ENCODE measurements at regions of chr16 and their contacts with region 1.

Region 1: GRCh38 chr16:49857423-49858181 is 1.7 kb upstream of the ZNF423 start:
- DNase-seq: peak; percentile 54
- H3K27ac ChIP-seq: peak overlapping the region; percentile 46; the same call in 1 of the 2 replicates
- CTCF ChIP-seq: peak; percentile 62

Region 2: GRCh38 chr16:49846800-49847199 is 10.8 kb before region 1 on chr16:
- CTCF ChIA-PET with region 1: no interaction called
- POLR2A ChIA-PET with region 1: no interaction called
- DNase-seq: no peak
- H3K27ac ChIP-seq: no peak overlapping the region
- CTCF ChIP-seq: no peak

Region 3: DNA sequence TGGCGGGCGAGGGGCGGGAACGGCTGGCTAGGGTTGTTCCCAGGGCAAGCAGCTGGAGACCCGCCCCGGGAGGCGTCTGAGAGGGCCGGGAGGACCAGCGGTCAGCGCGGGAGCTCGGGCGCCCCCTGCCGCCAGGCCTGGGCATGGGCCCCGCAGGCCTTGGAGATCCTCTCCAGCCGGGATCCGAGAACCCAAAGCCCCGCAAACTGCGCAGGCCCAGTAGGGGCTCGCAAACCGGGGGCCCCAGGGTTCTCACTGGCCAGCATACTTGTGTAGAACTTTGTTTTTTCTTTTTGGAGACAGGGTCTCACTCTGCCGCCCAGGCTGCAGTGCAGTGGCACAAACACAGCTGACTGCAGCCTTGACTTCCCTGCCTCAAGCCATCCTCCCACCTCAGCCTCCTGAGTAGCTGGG is 19.1 kb after region 1 on chr16:
- CTCF ChIA-PET with region 1: interaction called, 12 read pairs
- POLR2A ChIA-PET with region 1: no interaction called
- DNase-seq: peak; percentile 45
- H3K27ac ChIP-seq: no peak overlapping the region
- CTCF ChIP-seq: peak; percentile 49

Region 4: GRCh38 chr16:49921791-49922456 is 64.3 kb after region 1 on chr16:
- CTCF ChIA-PET with region 1: interaction called, 11 read pairs
- POLR2A ChIA-PET with region 1: no interaction called
- DNase-seq: peak; percentile 46
- H3K27ac ChIP-seq: no peak overlapping the region
- CTCF ChIP-seq: peak; percentile 21; the same call in 1 of the 2 replicates